Activated CD4-positive, alpha-beta T cell treated with anti-CD3 and anti-CD28 coated beads for 36 hours (primary cell): ENCODE measurements at regions of chr10 and their contacts with region 1.

Region 1: DNA sequence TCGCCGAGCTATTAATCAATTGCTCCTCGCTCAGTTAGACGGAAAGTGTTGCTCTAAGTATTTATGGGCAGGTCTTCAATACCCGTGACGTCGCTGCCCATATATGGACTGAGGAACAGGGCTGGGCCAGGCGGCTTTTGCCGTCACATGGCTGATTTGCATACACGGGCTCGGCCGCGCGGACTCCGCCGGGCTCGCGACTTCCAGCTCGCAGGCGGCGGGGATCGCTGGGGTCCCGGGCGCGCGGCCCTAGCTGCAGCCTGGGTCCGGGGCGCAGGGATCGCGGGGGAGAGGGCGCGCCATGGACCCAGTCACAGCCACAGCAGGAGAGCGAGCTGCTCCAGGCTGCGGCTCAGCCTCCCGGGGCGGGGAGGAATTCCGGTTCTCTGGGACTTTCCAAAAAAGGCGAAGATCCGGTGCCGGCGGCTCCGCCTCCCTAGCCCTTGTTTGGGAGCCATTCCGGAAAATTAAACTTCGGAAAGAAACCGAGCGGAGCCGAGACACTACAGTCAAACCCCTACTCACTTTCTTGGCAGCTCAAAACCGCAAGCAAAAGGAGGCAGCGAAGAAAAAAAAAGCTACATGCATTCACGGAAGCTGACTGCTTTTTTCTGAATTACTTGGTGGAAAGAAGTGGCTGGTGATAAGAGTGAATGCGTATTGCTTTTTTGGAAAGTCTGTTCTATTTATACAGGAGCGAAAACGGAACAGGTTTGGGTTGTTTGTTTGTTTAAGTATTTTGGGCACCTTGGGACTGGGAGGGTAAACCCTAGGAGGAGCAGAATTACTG is at the start of gene EGR2:
- DNase-seq: peak; percentile 96
- ATAC-seq: peak; percentile 77
- H3K4me3 Mint-ChIP-seq: peak within 1 kb of the TSS; percentile 99
- H3K27ac Mint-ChIP-seq: peak within 1 kb of the TSS; percentile 99
- H3K4me1 Mint-ChIP-seq: peaks cover 46% of the 10 kb centered on the region
- H3K27me3 Mint-ChIP-seq: peaks cover 19% of the 10 kb centered on the region
- total RNA-seq, gene EGR2: 46.0 to 53.9 TPM

Region 2: GRCh38 chr10:62050893-62051433 is 765.6 kb before region 1 on chr10:
- CTCF ChIA-PET with region 1: interaction called, 3 read pairs
- POLR2A ChIA-PET with region 1: no interaction called
- intact Hi-C with region 1: loop called (anchors 2 kb)
- DNase-seq: peak; percentile 89
- ATAC-seq: peak; percentile 48
- H3K4me3 Mint-ChIP-seq: peak overlapping the region; percentile 87
- H3K27ac Mint-ChIP-seq: peak overlapping the region; percentile 100
- H3K4me1 Mint-ChIP-seq: peaks cover 95% of the 10 kb centered on the region
- H3K27me3 Mint-ChIP-seq: no peaks in the 10 kb centered on the region

Region 3: GRCh38 chr10:62610649-62611229 is 205.8 kb before region 1 on chr10:
- CTCF ChIA-PET with region 1: interaction called, 51 read pairs
- POLR2A ChIA-PET with region 1: no interaction called
- intact Hi-C with region 1: loop called (anchors 1 kb)
- DNase-seq: peak; percentile 87
- ATAC-seq: peak; percentile 79
- H3K4me3 Mint-ChIP-seq: no peak overlapping the region
- H3K27ac Mint-ChIP-seq: no peak overlapping the region
- H3K4me1 Mint-ChIP-seq: peaks cover 27% of the 10 kb centered on the region
- H3K27me3 Mint-ChIP-seq: peaks cover 14% of the 10 kb centered on the region

Region 4: DNA sequence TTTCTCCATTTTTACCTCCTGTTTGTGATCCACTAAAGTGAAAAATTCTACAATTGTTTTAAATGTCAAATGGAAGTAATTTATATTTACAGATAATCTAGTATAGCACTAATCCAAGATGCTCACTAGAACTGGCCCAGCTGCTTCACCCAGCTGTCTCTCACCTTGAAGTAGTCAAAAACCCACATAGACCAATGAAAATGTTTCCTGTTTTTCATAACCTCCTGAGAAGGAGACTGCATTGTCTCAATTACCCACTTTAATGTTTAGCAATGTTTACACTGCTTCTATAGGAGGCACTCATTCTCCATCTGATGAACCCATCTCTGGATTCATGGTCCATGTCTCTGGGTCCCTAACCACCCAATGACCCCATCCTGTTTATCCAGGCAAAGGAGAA is 68.1 kb before region 1 on chr10:
- CTCF ChIA-PET with region 1: interaction called, 8 read pairs
- POLR2A ChIA-PET with region 1: interaction called, 8 read pairs
- intact Hi-C with region 1: loop called in 1 of 2 experiments (anchors 1 kb)
- DNase-seq: no peak
- ATAC-seq: no peak
- H3K4me3 Mint-ChIP-seq: no peak overlapping the region
- H3K27ac Mint-ChIP-seq: peak overlapping the region; percentile 82
- H3K4me1 Mint-ChIP-seq: peaks cover 27% of the 10 kb centered on the region
- H3K27me3 Mint-ChIP-seq: no peaks in the 10 kb centered on the region

Region 5: DNA sequence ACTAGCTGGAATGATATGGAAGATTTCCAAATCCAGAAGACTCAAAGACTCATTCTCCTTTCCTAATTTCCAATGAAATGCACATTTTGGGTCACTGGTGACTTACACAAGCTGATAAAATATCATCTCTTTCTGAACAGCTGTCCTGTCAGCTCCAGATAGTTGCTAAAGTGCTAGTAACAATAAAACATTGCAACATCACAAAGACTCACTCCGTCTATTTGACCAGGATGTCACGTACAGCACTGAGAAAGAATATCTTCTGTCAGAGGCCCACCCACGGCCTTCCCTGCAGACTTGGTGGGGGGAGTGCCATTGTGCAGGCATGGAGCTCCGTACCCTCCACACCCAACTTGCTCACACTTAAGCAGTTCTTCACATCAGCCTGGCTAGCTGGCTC is 78.5 kb after region 1 on chr10:
- CTCF ChIA-PET with region 1: no interaction called
- POLR2A ChIA-PET with region 1: no interaction called
- intact Hi-C with region 1: no loop called
- DNase-seq: no peak
- ATAC-seq: no peak
- H3K4me3 Mint-ChIP-seq: no peak overlapping the region
- H3K27ac Mint-ChIP-seq: no peak overlapping the region
- H3K4me1 Mint-ChIP-seq: no peaks in the 10 kb centered on the region
- H3K27me3 Mint-ChIP-seq: peaks cover 25% of the 10 kb centered on the region

Region 6: GRCh38 chr10:62992145-62992721 is 175.7 kb after region 1 on chr10:
- CTCF ChIA-PET with region 1: no interaction called
- POLR2A ChIA-PET with region 1: interaction called, 3 read pairs
- intact Hi-C with region 1: loop called (anchors 1 kb)
- DNase-seq: peak; percentile 28
- ATAC-seq: peak; percentile 19
- H3K4me3 Mint-ChIP-seq: peak overlapping the region; percentile 26
- H3K27ac Mint-ChIP-seq: peak overlapping the region; percentile 82
- H3K4me1 Mint-ChIP-seq: peaks cover 63% of the 10 kb centered on the region
- H3K27me3 Mint-ChIP-seq: peaks cover 3% of the 10 kb centered on the region

Region 7: DNA sequence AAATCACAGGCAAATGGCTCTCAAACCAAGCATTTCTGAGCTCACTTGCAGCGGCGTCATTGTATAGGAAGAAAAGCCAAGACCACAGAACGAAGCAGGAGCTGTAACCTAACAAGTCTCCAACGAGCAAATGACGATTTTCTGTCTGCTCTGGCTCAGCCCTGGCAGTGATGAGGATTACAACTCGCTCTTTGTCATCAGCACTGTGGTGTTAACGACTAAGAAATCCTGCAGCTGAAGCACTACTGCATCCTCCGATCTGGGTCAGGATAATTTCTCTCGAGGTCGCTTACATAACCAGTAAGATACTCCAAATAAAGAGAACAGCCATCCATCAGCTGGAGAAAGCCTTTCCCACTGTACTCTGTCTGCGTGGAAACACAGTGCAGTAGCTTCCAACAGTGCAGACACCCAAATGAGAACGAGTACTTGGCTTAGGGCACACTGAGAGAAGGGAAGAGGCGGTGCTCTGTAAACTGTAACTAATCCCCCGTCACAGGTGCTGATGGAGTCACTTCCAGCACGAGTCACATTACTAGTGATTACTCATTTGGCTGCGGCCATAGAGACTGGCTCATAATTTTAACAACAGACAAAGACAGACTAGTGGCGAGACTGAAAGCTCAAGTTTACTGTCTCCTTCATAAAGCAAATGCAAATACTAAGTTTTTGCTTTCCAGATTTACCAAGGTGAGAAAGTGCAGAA is 452.4 kb after region 1 on chr10:
- CTCF ChIA-PET with region 1: no interaction called
- POLR2A ChIA-PET with region 1: no interaction called
- intact Hi-C with region 1: loop called (anchors 5 to 10 kb)
- DNase-seq: peak; percentile 86
- ATAC-seq: peak; percentile 91
- H3K4me3 Mint-ChIP-seq: peak overlapping the region; percentile 94
- H3K27ac Mint-ChIP-seq: peak overlapping the region; percentile 99
- H3K4me1 Mint-ChIP-seq: peaks cover 21% of the 10 kb centered on the region
- H3K27me3 Mint-ChIP-seq: no peaks in the 10 kb centered on the region